ENCODE measurements at regions of chr16 and their contacts with region 1.

Region 1: DNA sequence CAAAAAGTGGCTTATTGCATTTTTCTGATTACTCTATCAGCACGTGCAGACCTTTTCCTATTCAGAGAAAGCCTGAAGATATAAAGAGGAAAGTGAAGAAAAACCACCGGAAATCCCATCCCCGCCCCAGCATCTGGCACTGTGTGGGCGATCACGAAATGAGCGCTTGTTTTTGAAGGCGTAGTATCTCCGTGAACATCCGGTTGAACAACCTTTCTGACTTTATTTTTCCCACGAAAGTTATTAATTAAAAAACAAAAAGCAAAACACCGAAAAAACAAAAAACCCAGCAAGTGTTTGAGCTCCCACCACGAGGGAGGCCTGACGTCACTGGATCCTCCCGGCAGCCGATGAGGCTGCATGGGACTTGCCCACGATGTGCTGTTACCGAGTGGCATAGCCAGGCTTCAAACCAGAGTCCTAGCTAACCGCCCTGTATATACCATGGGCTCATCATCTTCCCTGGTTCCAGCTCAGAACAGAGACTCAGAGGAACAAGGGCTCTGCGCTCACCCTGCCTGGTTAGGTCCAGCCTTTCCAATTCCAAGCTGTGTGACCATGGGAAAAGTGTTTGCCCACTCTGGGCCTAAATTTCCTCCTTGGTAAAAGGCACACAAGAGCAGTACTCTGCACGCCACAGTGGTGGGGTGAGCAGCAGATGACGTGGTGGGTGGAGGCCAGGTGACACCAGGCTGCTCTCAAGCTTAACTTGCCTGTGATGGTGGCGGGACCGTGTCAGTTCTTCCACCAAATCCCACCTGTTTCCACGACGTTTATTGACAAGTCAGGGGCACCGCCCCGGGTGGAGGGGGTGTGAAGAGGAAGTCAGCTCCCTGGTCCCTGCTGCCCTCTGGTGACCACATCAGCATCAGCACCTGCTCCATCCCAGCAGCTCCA is 34.3 kb upstream of the IL21R start:
- DNase-seq: peak; percentile 41 to 88
- H3K4me3 ChIP-seq: no peak overlapping the region
- H3K27ac ChIP-seq: no peak overlapping the region
- H3K4me1 ChIP-seq: no peaks in the 10 kb centered on the region; a peak in 3 of 7 replicates
- H3K27me3 ChIP-seq: no peaks in the 10 kb centered on the region
- CTCF ChIP-seq: peak; percentile 89 to 93 (median 89)
- EP300 ChIP-seq: no peak
- POLR2A ChIP-seq: no peak
- RAD21 ChIP-seq: peak; percentile 91 to 93

Region 2: DNA sequence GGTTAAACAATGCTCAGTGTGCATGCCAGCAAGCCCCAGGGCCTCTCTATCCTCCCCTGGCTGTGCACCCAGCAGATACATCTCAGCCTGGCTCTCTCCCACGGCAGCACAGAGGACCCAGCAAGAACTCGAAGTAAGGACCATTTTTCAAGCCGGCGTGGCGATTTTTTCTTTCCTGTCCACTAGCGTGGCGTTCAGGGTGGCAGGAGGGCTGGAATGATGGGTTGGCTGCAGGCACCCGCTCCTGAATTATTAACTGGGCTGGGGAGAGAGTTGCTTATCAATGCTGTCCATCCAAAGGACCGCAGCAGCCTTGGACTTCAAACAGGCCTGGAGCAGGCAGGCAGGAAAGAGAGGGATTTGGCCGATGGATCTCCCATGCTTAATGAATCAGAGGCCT is 294.0 kb before region 1 on chr16:
- CTCF ChIA-PET with region 1: no interaction called
- POLR2A ChIA-PET with region 1: no interaction called
- DNase-seq: no peak
- H3K4me3 ChIP-seq: no peak overlapping the region
- H3K27ac ChIP-seq: no peak overlapping the region
- H3K4me1 ChIP-seq: no peaks in the 10 kb centered on the region
- H3K27me3 ChIP-seq: no peaks in the 10 kb centered on the region
- CTCF ChIP-seq: no peak
- EP300 ChIP-seq: no peak
- POLR2A ChIP-seq: no peak
- RAD21 ChIP-seq: no peak

Region 3: DNA sequence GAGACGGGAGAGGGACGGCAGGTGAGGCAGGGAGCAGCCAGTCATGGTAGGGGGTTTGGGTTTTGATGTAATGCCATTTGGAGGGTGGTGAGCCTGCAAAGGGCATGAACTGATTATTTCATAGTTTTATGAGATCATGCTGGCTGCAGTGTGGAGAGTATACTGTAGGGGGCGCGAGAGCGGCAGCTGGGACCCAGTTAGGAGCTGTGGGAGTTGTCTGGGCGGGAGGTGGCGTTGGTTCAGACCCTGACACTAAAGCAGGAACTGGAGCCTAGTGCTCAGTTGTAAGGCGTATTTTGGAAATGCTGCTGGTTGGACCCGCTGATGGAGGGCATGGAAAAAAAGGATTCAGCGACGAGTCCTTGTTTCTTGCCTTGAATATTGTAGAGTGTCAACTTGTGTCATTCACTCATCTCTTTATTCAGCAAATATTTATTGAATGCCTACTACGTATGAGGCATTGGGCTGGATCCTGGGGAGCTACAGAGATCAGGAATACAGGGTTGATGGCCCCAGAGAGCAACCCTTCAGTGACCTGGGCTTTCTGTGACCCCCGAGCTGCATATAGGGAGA is 188.1 kb before region 1 on chr16:
- CTCF ChIA-PET with region 1: interaction called, 50 read pairs
- POLR2A ChIA-PET with region 1: no interaction called
- DNase-seq: peak; percentile 50 to 96
- H3K4me3 ChIP-seq: no peak overlapping the region
- H3K27ac ChIP-seq: no peak overlapping the region
- H3K4me1 ChIP-seq: peaks cover 0 to 3% (median 0%) of the 10 kb centered on the region in 4 experiments; a peak in 3 of 7 replicates
- H3K27me3 ChIP-seq: no peaks in the 10 kb centered on the region
- CTCF ChIP-seq: peak; percentile 86 to 98 (median 95)
- EP300 ChIP-seq: no peak
- POLR2A ChIP-seq: no peak
- RAD21 ChIP-seq: peak; percentile 81 to 86

Region 4: DNA sequence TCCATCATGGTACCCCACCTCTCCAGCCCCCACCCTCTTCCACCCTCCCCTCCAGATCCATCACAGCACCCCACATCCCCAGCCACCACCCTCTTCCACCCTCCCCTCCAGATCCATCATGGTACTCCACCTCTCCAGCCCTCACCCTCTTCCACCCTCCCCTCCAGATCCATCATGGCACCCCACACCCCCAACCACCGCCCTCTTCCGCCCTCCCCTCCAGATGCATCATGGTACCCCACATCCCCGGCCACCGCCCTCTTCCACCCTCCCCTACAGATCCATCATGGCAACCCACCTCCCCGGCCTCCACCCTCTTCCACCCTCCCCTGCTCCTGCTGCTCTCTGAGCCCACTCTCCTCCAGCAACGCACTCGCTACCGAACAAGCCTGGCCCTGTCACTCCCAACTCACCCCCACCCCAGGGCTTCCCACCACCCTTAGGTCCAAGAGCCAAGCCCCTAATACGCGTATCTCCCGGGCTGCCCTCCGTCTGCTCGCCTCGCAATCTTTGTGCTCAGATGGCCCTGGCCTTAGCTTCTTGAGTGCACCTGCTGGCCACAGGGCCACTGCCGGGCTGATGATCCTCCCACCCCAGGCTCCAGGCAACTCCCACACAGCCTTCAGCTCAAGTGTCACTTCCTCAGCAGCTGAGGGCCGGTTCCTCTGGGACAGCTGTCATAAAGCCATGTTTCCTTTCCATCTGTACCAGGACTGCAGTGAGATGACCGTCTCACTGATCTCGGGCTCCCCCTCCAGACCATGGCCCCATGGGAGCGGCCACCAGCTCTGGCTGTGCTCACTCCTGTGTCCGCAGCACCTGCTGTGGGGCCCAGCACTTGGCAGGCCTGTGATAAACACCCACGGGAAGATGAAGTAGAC is 138.8 kb before region 1 on chr16:
- CTCF ChIA-PET with region 1: interaction called, 241 read pairs
- POLR2A ChIA-PET with region 1: no interaction called
- DNase-seq: no peak
- H3K4me3 ChIP-seq: no peak overlapping the region
- H3K27ac ChIP-seq: no peak overlapping the region
- H3K4me1 ChIP-seq: 0 out of 7 replicates have a peak, but pooled peaks cover 0 to 2% (median 0%) of the 10 kb centered on the region in 4 experiments
- H3K27me3 ChIP-seq: no peaks in the 10 kb centered on the region
- CTCF ChIP-seq: no peak
- EP300 ChIP-seq: no peak
- POLR2A ChIP-seq: no peak
- RAD21 ChIP-seq: no peak

Region 5: DNA sequence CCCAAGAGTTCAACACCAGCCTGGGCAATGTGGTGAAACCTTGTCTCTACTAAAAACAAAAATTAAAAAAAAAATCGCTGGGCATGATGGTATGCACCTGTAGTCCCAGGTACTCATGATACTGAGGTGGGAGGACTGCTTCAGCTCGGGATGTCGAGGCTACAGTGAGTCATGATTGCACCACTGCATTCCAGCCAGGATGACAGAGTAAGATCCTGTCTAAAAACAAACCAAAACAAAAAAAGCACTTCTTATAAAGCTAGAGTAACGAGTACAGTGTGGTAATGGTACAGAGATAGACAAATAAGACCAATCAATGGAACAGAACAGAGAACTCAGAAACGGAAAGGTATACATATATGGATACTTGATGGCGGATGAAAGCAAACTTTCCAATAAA is 103.6 kb before region 1 on chr16:
- CTCF ChIA-PET with region 1: no interaction called
- POLR2A ChIA-PET with region 1: no interaction called
- DNase-seq: no peak
- H3K4me3 ChIP-seq: no peak overlapping the region
- H3K27ac ChIP-seq: no peak overlapping the region
- H3K4me1 ChIP-seq: peaks cover 0 to 9% (median 4%) of the 10 kb centered on the region in 4 experiments; a peak in 4 of 7 replicates
- H3K27me3 ChIP-seq: no peaks in the 10 kb centered on the region
- CTCF ChIP-seq: no peak
- EP300 ChIP-seq: no peak
- POLR2A ChIP-seq: no peak
- RAD21 ChIP-seq: no peak

Region 6: GRCh38 chr16:27315277-27316037 is 52.3 kb before region 1 on chr16:
- CTCF ChIA-PET with region 1: interaction called, 22 read pairs
- POLR2A ChIA-PET with region 1: interaction called, 4 read pairs
- DNase-seq: peak in 1 of 2 experiments; percentile 60
- H3K4me3 ChIP-seq: peak overlapping the region in 1 of 4 experiments; percentile 3; a peak in 1 of 8 replicates
- H3K27ac ChIP-seq: no peak overlapping the region
- H3K4me1 ChIP-seq: peaks cover 8 to 20% (median 10%) of the 10 kb centered on the region in 4 experiments
- H3K27me3 ChIP-seq: peaks cover 0 to 3% (median 2%) of the 10 kb centered on the region in 4 experiments; a peak in 3 of 7 replicates
- CTCF ChIP-seq: peak in 2 of 3 experiments; percentile 8 to 21; a peak in 2 of 4 replicates
- EP300 ChIP-seq: no peak
- POLR2A ChIP-seq: no peak
- RAD21 ChIP-seq: no peak; a peak in 1 of 4 replicates

Region 7: GRCh38 chr16:27355610-27356009 is 12.1 kb before region 1 on chr16:
- CTCF ChIA-PET with region 1: interaction called, 42 read pairs
- POLR2A ChIA-PET with region 1: interaction called, 6 read pairs
- DNase-seq: peak; percentile 41 to 83
- H3K4me3 ChIP-seq: no peak overlapping the region
- H3K27ac ChIP-seq: no peak overlapping the region
- H3K4me1 ChIP-seq: 0 out of 7 replicates have a peak, but pooled peaks cover 0 to 2% (median 0%) of the 10 kb centered on the region in 4 experiments
- H3K27me3 ChIP-seq: no peaks in the 10 kb centered on the region
- CTCF ChIP-seq: peak; percentile 68 to 74 (median 74)
- EP300 ChIP-seq: no peak
- POLR2A ChIP-seq: no peak
- RAD21 ChIP-seq: peak; percentile 54 to 72

Measured in H1 (cell line).